ENCODE measurements at regions of chr11 and their contacts with region 1.

Region 1: DNA sequence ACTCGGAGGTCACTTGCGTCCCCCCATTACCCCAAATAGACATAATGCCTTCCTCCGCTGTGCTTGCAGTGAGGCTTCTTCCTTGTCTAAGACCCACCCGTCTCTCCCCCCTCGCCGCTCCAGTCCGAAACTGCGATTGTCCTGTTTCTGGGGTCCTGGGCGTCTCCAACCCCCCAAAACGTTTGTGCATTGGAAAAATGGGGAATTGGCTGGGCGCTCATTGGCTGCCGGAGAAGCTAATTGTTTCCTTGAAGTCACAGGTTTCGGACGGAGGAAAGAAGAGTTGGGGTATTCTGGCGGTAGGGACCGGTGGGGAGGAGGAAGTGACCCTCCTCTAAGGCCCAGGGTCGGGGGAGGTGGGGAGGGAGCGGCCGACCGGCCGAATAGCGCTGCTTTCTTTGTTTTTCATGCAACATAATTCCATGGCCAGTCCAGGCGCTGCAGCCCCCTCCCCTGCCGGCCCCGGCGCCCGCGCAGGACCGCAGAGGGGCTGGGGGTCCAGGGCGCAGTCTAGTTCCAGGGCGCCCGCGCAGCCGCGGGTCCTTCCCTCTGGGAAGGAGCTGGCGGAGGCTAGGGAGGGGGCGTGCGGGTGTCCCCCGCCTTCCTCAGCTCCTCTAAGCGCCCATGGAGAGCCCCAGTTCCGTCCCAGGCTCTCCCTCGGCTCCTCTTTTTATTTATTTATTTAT is 12.7 kb upstream of the CPT1A start:
- DNase-seq: no peak
- ATAC-seq: no peak
- H3K4me3 ChIP-seq: peak overlapping the region; percentile 56 to 72
- H3K27ac ChIP-seq: no peak overlapping the region
- H3K4me1 ChIP-seq: peaks cover 9% of the 10 kb centered on the region; the same call in 1 of the 2 replicates
- H3K27me3 ChIP-seq: no peaks in the 10 kb centered on the region
- CTCF ChIP-seq: no peak

Region 2: GRCh38 chr11:68819409-68819808 is 35.0 kb before region 1 on chr11:
- CTCF ChIA-PET with region 1: no interaction called
- POLR2A ChIA-PET with region 1: interaction called, 13 read pairs
- in situ Hi-C with region 1: no loop called
- intact Hi-C with region 1: no loop called
- DNase-seq: no peak
- ATAC-seq: peak; percentile 35; the same call in 1 of the 2 replicates
- H3K4me3 ChIP-seq: no peak overlapping the region
- H3K27ac ChIP-seq: no peak overlapping the region
- H3K4me1 ChIP-seq: peaks cover 8% of the 10 kb centered on the region; the same call in 1 of the 2 replicates
- H3K27me3 ChIP-seq: no peaks in the 10 kb centered on the region
- CTCF ChIP-seq: no peak

Region 3: DNA sequence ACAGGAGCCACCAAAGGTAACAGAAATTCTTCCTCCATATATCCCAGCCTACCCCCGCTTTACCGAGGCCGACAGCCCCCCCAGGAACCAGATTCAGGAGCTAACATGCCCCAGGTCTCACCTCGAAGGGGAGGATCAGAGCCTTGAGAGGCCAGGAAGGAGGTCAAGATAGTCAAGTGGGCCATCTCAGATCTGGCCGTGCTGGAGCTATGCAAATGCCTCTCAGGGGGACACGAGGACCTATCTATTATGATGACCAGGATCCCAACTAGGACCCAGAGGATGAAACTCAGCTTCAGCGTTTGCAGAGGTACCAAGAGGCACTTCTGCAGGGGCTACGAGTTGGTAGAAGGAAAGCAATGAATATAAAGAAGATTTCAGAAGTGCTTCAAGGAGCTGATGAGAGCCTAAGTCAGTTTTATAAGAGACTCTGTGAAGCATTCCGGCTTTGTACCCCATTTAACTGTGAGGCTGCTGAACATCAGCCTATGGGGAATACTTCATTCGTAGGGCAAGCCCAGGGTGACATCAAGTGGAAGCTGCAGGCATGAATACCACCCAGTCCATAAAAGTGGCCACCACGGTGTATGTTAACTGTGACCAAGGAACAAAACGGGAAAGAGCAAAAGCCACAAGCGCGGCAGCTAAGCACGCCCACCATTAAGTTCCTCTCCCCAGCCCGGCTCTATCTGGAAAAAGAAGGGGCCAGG is 15.0 kb after region 1 on chr11:
- CTCF ChIA-PET with region 1: no interaction called
- POLR2A ChIA-PET with region 1: no interaction called
- in situ Hi-C with region 1: no loop called
- intact Hi-C with region 1: no loop called
- DNase-seq: no peak
- ATAC-seq: peak; percentile 73
- H3K4me3 ChIP-seq: peak overlapping the region; percentile 43 to 62
- H3K27ac ChIP-seq: peak overlapping the region; percentile 67
- H3K4me1 ChIP-seq: peaks cover 12% of the 10 kb centered on the region; the same call in 1 of the 2 replicates
- H3K27me3 ChIP-seq: peaks cover 2% of the 10 kb centered on the region; the same call in 1 of the 2 replicates
- CTCF ChIP-seq: no peak; the same call in 1 of the 2 replicates